Psoas muscle (tissue), 8 donors: ENCODE measurements at regions of chr16 and their contacts with region 1.

Region 1: GRCh38 chr16:75519881-75520280 is 16.0 kb downstream of the CHST5 start:
- DNase-seq: no peak
- ATAC-seq: no peak
- H3K4me3 ChIP-seq: no peak overlapping the region
- H3K27ac ChIP-seq: no peak overlapping the region
- H3K4me1 ChIP-seq: no peaks in the 10 kb centered on the region
- H3K27me3 ChIP-seq: no peaks in the 10 kb centered on the region
- CTCF ChIP-seq: no peak

Region 2: GRCh38 chr16:75402821-75403475 is 116.9 kb before region 1 on chr16:
- intact Hi-C with region 1: no loop called
- DNase-seq: no peak
- ATAC-seq: peak; percentile 24 to 70 (median 59)
- H3K4me3 ChIP-seq: no peak overlapping the region
- H3K27ac ChIP-seq: peak overlapping the region; percentile 48
- H3K4me1 ChIP-seq: peaks cover 19% of the 10 kb centered on the region
- H3K27me3 ChIP-seq: no peaks in the 10 kb centered on the region
- CTCF ChIP-seq: peak; percentile 54

Region 3: GRCh38 chr16:75471723-75472633 is 47.9 kb before region 1 on chr16:
- intact Hi-C with region 1: loop called (anchors 2 kb)
- DNase-seq: no peak
- ATAC-seq: peak; percentile 88 to 99 (median 94)
- H3K4me3 ChIP-seq: no peak overlapping the region
- H3K27ac ChIP-seq: no peak overlapping the region
- H3K4me1 ChIP-seq: no peaks in the 10 kb centered on the region
- H3K27me3 ChIP-seq: no peaks in the 10 kb centered on the region
- CTCF ChIP-seq: peak; percentile 83

Region 4: GRCh38 chr16:75566040-75566810 is 46.3 kb after region 1 on chr16 and contains the start of gene GABARAPL2:
- intact Hi-C with region 1: loop called in 1 of 2 experiments (anchors 5 kb)
- DNase-seq: peak; percentile 83 to 92
- ATAC-seq: peak; percentile 88 to 95 (median 92)
- H3K4me3 ChIP-seq: peak within 1 kb of the TSS; percentile 99
- H3K27ac ChIP-seq: peak within 1 kb of the TSS; percentile 90
- H3K4me1 ChIP-seq: peaks cover 47% of the 10 kb centered on the region
- H3K27me3 ChIP-seq: no peaks in the 10 kb centered on the region
- CTCF ChIP-seq: no peak
- total RNA-seq, gene GABARAPL2: 107 to 180 (median 148) TPM